ENCODE measurements at regions of chr7 and their contacts with region 1.

Region 1: DNA sequence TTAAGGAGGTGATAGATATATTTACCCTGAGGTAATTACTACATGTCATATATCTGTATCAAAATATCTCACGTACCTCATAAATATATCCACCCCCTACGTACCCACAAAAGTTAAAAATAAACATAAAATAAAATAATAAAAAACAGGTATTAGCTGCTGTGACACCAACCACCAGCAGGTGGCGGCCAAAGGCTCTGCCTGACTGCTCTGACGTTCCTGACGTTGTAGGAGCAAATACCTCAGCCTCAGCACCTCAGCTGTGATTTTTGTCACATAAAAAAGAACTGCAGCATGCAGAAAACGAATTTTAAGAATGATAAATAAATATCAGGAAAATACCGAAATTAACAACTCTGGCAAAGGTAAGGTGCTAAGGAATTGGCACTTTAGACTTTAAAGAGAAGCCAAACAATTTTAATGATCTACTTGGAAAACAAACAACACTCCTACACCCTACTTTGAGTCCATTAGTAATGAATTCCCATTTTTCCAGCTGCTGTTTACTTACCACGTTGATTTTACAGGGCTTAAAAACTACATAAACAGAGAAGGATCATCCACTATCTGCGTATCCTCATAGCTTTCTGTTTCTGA is 125.4 kb upstream of the TARP start:
- DNase-seq: peak; percentile 60
- H3K4me3 ChIP-seq: no peak overlapping the region
- H3K27ac ChIP-seq: no peak overlapping the region
- H3K4me1 ChIP-seq: no peaks in the 10 kb centered on the region
- H3K27me3 ChIP-seq: no peaks in the 10 kb centered on the region
- CTCF ChIP-seq: peak; percentile 83 to 89
- POLR2A ChIP-seq: no peak

Region 2: DNA sequence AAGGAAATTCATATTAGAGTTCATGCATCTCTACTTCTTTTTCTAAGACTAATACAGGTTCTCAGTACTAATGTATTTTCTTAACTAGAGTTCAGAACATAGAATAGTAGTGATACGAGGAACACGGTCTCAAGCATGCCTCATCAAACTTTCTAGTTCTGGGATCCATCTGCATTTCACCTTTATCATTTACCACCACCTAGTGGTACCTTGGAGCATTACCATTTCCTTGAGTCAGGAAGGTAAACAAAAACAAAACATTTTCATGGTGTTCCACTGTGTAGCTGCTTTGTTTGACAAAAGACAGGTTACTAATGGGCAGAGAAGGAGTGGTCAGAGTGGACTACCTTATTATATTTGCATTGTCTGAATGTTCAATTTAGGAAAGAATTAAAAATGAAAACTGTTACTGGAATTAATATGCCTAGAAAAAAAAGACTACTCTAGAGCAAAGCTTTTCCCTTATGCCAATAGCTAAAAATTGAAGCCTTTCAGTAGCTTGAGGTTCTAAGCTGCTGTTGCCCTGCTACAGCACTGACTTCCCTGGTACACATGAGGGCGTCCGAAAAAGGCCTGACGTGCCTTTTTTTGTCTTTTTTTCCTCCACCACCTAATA is 176.2 kb before region 1 on chr7:
- CTCF ChIA-PET with region 1: no interaction called
- POLR2A ChIA-PET with region 1: no interaction called
- dilution Hi-C with region 1: no loop called
- intact Hi-C with region 1: no loop called
- DNase-seq: peak; percentile 75
- H3K4me3 ChIP-seq: no peak overlapping the region
- H3K27ac ChIP-seq: no peak overlapping the region
- H3K4me1 ChIP-seq: no peaks in the 10 kb centered on the region
- H3K27me3 ChIP-seq: no peaks in the 10 kb centered on the region
- CTCF ChIP-seq: peak; percentile 47 to 63
- POLR2A ChIP-seq: no peak

Region 3: GRCh38 chr7:38276096-38276877 is 122.5 kb before region 1 on chr7:
- CTCF ChIA-PET with region 1: no interaction called
- POLR2A ChIA-PET with region 1: no interaction called
- dilution Hi-C with region 1: no loop called
- intact Hi-C with region 1: no loop called
- DNase-seq: no peak
- H3K4me3 ChIP-seq: no peak overlapping the region
- H3K27ac ChIP-seq: no peak overlapping the region
- H3K4me1 ChIP-seq: no peaks in the 10 kb centered on the region
- H3K27me3 ChIP-seq: peaks cover 0 to 3% of the 10 kb centered on the region in 2 experiments
- CTCF ChIP-seq: no peak
- POLR2A ChIP-seq: no peak

Region 4: DNA sequence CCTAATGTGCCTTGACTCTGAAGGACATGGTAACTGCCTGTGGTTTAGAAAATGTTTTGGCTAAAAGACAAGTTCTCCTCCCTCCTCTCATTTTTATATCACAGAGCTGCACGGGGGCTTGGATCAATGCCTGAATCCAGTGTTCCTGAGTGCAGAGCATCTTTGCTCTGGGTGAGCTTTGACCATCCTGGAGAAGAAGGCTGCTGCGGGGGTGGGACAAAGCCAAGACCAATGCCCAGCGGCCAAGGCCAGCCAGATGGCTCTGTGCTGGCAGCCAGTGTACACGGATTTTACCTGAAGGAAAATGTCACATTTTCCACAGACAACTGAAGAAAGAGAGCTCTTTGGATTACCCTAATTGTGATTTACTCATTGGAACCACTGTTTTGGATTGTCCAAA is 23.4 kb before region 1 on chr7:
- CTCF ChIA-PET with region 1: interaction called, 21 read pairs
- POLR2A ChIA-PET with region 1: no interaction called
- dilution Hi-C with region 1: no loop called
- intact Hi-C with region 1: no loop called
- DNase-seq: no peak
- H3K4me3 ChIP-seq: no peak overlapping the region
- H3K27ac ChIP-seq: no peak overlapping the region
- H3K4me1 ChIP-seq: no peaks in the 10 kb centered on the region
- H3K27me3 ChIP-seq: no peaks in the 10 kb centered on the region
- CTCF ChIP-seq: no peak
- POLR2A ChIP-seq: no peak

Region 5: GRCh38 chr7:38382684-38383083 is 16.1 kb before region 1 on chr7:
- CTCF ChIA-PET with region 1: interaction called, 28 read pairs
- POLR2A ChIA-PET with region 1: no interaction called
- dilution Hi-C with region 1: no loop called
- intact Hi-C with region 1: no loop called
- DNase-seq: peak; percentile 76
- H3K4me3 ChIP-seq: no peak overlapping the region
- H3K27ac ChIP-seq: peak overlapping the region; percentile 75
- H3K4me1 ChIP-seq: peaks cover 50% of the 10 kb centered on the region
- H3K27me3 ChIP-seq: no peaks in the 10 kb centered on the region
- CTCF ChIP-seq: no peak
- POLR2A ChIP-seq: no peak

Region 6: DNA sequence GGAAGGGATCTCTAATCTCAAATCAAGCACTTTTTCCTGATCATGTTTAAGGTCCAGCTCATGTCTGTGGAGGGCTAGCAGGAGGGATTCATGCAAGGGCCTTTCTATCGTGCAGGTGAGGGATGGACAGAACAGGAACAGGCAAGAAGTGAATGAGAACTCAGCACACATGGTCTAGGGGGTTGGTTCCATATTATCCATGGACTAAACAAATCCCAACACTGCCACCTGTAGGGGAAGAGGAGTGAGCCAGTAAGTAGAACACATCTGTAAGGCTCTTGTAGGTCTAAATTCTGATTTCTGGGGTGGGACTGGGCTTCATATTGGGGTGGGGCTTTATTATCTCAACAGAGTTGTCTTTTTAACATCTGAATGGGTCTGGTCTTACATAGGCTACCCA is 12.6 kb after region 1 on chr7:
- CTCF ChIA-PET with region 1: interaction called, 19 read pairs
- POLR2A ChIA-PET with region 1: no interaction called
- dilution Hi-C with region 1: no loop called
- intact Hi-C with region 1: no loop called
- DNase-seq: peak; percentile 39
- H3K4me3 ChIP-seq: no peak overlapping the region
- H3K27ac ChIP-seq: no peak overlapping the region
- H3K4me1 ChIP-seq: peaks cover 5% of the 10 kb centered on the region
- H3K27me3 ChIP-seq: no peaks in the 10 kb centered on the region
- CTCF ChIP-seq: peak in 1 of 2 donors; percentile 57
- POLR2A ChIP-seq: no peak

Region 7: GRCh38 chr7:39197831-39198230 is 799.0 kb after region 1 on chr7:
- CTCF ChIA-PET with region 1: no interaction called
- POLR2A ChIA-PET with region 1: no interaction called
- dilution Hi-C with region 1: no loop called
- intact Hi-C with region 1: no loop called
- DNase-seq: peak; percentile 3
- H3K4me3 ChIP-seq: no peak overlapping the region
- H3K27ac ChIP-seq: no peak overlapping the region
- H3K4me1 ChIP-seq: no peaks in the 10 kb centered on the region
- H3K27me3 ChIP-seq: no peaks in the 10 kb centered on the region
- CTCF ChIP-seq: no peak
- POLR2A ChIP-seq: no peak

Region 8: GRCh38 chr7:39517240-39517639 is 1118.4 kb after region 1 on chr7:
- CTCF ChIA-PET with region 1: interaction called, 10 read pairs
- POLR2A ChIA-PET with region 1: no interaction called
- dilution Hi-C with region 1: no loop called
- intact Hi-C with region 1: loop called (anchors 5 kb)
- DNase-seq: no peak
- H3K4me3 ChIP-seq: no peak overlapping the region
- H3K27ac ChIP-seq: no peak overlapping the region
- H3K4me1 ChIP-seq: no peaks in the 10 kb centered on the region
- H3K27me3 ChIP-seq: peaks cover 2 to 3% of the 10 kb centered on the region in 2 experiments
- CTCF ChIP-seq: no peak
- POLR2A ChIP-seq: no peak

Region 9: DNA sequence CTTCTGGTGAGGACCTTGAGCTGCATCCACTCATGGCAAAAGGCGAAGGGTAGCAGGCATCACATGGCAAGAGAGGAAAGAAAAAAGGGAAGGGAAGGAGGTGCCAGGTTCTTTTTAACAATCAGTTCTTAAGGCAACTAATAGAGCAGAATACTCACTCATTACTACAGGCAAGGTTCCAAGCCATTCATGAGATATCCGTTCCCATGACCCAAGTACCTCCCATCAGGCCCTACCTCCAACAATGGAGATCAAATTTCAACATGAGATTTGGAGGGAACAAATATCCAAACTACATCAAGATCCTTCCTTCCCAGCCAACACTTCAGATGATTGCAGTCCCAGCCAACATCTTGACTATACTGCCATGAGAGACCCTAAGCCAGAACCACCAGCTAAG is 1128.5 kb after region 1 on chr7:
- CTCF ChIA-PET with region 1: no interaction called
- POLR2A ChIA-PET with region 1: no interaction called
- dilution Hi-C with region 1: no loop called
- intact Hi-C with region 1: loop called (anchors 5 kb)
- DNase-seq: peak; percentile 35
- H3K4me3 ChIP-seq: no peak overlapping the region
- H3K27ac ChIP-seq: no peak overlapping the region
- H3K4me1 ChIP-seq: no peaks in the 10 kb centered on the region
- H3K27me3 ChIP-seq: peaks cover 0 to 2% of the 10 kb centered on the region in 2 experiments
- CTCF ChIP-seq: no peak
- POLR2A ChIP-seq: no peak